ENCODE measurements at regions of chr5 and their contacts with region 1.

Region 1: DNA sequence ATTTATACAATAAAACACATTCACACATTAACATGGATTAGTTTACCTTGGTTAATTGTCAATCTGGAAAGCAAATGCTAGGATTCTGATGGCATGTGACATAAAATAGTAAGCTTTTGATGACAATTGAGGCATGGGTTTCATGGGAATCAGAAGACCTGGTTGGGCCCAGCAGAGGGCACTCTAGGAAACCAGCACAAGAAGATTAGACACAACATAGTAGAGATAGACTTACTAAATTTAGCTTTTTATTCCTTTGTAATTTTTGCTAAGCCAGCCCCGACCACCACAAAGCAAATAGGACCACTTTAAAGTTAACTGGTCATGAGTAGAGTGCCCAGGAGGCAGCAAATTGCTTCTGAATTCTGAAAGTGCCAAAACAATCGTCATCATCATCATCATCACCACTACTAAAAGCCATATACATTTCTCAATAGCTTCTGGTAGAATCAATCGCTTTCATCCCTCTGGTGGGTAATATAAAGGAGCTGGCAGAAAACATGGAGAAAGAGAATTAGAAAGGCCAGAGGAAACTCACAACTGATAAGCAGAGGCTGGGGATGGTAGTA is 163.2 kb downstream of the ARRDC3 start:
- DNase-seq: peak in 3 of 4 experiments; percentile 29 to 42 (median 37)
- ATAC-seq: peak; percentile 85
- H3K4me3 ChIP-seq: no peak overlapping the region
- H3K27ac ChIP-seq: peak overlapping the region; percentile 50; the same call in 1 of the 3 replicates
- H3K4me1 ChIP-seq: peaks cover 0 to 14% of the 10 kb centered on the region in 2 experiments; a peak in 3 of 5 replicates
- H3K27me3 ChIP-seq: no peaks in the 10 kb centered on the region
- CTCF ChIP-seq: peak; percentile 48 to 57 (median 51); a peak in 5 of 6 replicates
- EP300 ChIP-seq: no peak
- POLR2A ChIP-seq: no peak
- RAD21 ChIP-seq: peak; percentile 24 to 44; a peak in 3 of 4 replicates

Region 2: GRCh38 chr5:90866333-90866732 is 353.6 kb before region 1 on chr5:
- CTCF ChIA-PET with region 1: no interaction called
- POLR2A ChIA-PET with region 1: no interaction called
- in situ Hi-C with region 1: no loop called
- intact Hi-C with region 1: loop called (anchors 5 kb)
- DNase-seq: peak; percentile 18 to 47 (median 31)
- ATAC-seq: peak; percentile 84
- H3K4me3 ChIP-seq: no peak overlapping the region
- H3K27ac ChIP-seq: no peak overlapping the region; the same call in 2 of the 3 replicates
- H3K4me1 ChIP-seq: no peaks in the 10 kb centered on the region
- H3K27me3 ChIP-seq: no peaks in the 10 kb centered on the region
- CTCF ChIP-seq: peak; percentile 30 to 73 (median 32); a peak in 3 of 6 replicates
- EP300 ChIP-seq: no peak
- POLR2A ChIP-seq: no peak
- RAD21 ChIP-seq: peak; percentile 68 to 75

Region 3: DNA sequence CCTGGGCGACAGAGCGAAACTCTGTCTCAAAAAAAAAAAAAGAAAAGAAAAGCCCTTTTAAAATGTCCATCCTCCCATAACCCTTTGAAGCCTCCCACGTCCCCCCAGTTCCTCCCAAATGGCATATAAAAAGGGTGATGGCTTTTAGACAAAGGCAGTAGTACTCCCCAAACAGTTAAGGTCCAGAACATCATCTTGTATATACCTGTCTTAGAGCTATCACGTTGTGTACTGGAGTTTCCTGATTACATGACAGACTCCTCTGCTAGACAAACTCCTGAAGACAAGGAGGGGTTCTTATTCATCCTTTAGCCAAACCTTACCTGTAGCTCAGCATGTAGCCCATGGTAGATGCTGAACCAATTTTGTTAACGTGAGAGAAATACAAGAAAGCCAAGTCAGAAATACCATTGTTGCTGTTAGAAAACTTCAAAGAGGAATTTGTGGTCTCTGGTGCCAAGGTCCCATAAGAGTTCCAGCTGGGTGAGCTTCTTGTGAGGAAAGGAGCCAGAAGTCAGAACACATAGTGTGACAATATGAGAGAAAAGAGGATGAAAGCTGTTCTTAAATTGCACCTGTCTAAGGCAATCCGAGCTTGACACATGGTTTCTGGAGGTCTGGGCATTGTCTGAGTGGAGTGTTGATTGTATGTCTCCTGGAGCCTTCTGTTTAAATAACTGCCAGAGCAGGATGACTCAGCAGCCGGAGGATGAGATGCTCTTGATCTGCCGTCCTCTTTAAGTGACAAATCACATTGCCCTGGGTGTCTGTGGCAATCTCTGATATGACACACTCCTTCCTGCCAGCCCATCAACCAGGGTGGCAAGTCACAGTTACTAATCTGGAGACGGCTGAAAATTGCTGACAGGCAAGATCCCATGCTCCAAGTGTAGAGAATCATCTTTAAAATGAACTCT is 94.1 kb after region 1 on chr5:
- CTCF ChIA-PET with region 1: no interaction called
- POLR2A ChIA-PET with region 1: no interaction called
- in situ Hi-C with region 1: no loop called
- intact Hi-C with region 1: no loop called
- DNase-seq: peak; percentile 70 to 93 (median 80)
- ATAC-seq: peak; percentile 95
- H3K4me3 ChIP-seq: no peak overlapping the region
- H3K27ac ChIP-seq: peak overlapping the region; percentile 63
- H3K4me1 ChIP-seq: peaks cover 4 to 20% of the 10 kb centered on the region in 2 experiments; a peak in 4 of 5 replicates
- H3K27me3 ChIP-seq: no peaks in the 10 kb centered on the region
- CTCF ChIP-seq: no peak
- EP300 ChIP-seq: peak; percentile 90
- POLR2A ChIP-seq: 0 out of 2 replicates have a peak, but pooled peaks have one; percentile 31
- RAD21 ChIP-seq: peak; percentile 11 to 15; a peak in 1 of 4 replicates

Measured in K562 (cell line).